ENCODE measurements at regions of chr12 and their contacts with region 1.

Region 1: GRCh38 chr12:47980197-47980596 is 16.8 kb downstream of the TMEM106C start:
- DNase-seq: no peak
- H3K4me3 Mint-ChIP-seq: no peak overlapping the region
- H3K27ac Mint-ChIP-seq: no peak overlapping the region
- H3K4me1 Mint-ChIP-seq: no peaks in the 10 kb centered on the region
- H3K27me3 Mint-ChIP-seq: peaks cover 13% of the 10 kb centered on the region

Region 2: GRCh38 chr12:47990351-47991105 is 10.3 kb after region 1 on chr12:
- CTCF ChIA-PET with region 1: no interaction called
- POLR2A ChIA-PET with region 1: interaction called, 10 read pairs
- DNase-seq: peak; percentile 83
- H3K4me3 Mint-ChIP-seq: no peak overlapping the region
- H3K27ac Mint-ChIP-seq: peak overlapping the region; percentile 62
- H3K4me1 Mint-ChIP-seq: peaks cover 28% of the 10 kb centered on the region
- H3K27me3 Mint-ChIP-seq: peaks cover 69% of the 10 kb centered on the region

Measured in activated CD4-positive, alpha-beta memory T cell treated with anti-CD3 and anti-CD28 coated beads, Interleukin-2, amount 10 ng/mL, durations not matched to agents 7 days and 5 days (primary cell).